ENCODE measurements at regions of chr1 and their contacts with region 1.

Region 1: DNA sequence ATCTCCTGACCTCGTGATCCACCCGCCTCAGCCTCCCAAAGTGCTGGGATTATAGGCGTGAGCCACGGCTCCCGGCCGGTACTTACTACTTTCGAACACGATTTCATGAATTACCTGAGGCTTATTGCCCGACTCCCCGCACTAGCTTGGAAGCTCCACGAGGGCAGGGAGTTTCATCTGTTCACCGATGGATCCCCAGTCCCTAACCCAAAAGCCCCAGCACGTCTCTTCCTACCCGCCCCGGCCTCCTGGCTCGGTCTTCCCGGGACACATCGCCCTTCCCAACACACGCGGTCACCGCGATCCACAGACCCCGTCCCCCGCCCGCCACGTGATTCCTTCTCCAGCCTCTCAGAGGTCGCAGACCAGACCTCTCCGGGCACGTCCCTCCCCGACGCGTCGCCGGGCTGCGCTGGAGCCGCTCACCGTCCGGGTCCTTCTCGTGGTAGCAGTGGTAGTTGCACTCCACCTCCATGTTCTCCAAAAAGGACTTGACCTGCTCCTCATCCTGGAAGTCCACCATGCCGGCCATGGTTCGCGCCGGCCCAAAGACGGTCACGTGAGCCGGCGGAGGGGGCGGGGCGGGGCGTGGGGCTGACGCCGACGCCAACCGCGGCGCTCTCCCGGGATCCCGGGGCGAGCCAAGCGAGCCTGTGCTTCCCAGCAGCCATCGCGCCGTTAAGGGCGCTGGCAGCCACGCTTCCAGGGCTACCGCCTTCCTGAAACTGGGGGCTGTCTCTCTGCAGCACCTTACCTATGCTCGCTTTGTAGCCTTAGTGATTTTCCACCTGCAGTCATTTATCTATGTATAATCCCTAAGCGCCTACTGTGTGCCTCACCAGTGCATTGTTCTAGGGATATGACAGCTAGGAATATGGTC is at the start of gene COA7:
- DNase-seq: peak; percentile 71
- H3K4me3 ChIP-seq: peak within 1 kb of the TSS; percentile 77
- H3K27ac ChIP-seq: no peak within 1 kb of the TSS
- H3K4me1 ChIP-seq: peaks cover 19% of the 10 kb centered on the region
- CTCF ChIP-seq: no peak
- total RNA-seq, gene COA7: 6.6 and 7.0 TPM in 2 replicates

Region 2: DNA sequence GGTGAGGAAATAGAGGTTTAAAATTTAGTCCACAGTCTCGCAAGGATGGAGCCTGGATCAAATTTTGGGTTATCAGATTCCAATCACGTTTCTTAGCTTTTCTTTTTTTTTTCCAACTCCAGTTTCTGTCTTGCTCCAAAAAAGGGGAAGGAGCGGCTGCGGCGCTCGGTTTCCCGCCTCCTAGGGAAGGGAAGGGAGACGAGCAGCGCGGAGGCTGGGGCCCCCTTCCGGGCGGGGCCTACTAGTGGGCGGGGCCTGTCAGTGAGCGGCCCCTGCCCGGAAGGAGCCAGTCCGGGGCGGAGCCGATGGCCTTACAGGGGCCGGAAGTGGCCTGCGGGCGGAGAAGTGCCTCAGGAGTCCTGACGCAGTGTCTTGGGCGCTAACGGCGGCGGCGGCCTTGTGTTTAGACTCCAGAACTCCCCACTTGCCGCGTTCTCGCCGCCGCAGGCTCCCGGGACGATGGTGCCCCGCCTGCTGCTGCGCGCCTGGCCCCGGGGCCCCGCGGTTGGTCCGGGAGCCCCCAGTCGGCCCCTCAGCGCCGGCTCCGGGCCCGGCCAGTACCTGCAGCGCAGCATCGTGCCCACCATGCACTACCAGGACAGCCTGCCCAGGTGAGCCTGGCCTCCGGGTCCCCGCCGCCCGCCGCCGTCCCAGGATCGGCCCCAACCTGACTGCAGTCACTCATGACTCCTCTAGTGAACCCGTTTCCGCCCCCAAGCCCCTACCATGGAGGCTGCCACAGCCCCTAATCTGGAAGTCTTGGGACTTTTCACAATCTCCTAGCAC is 498.6 kb after region 1 on chr1 and contains the start of gene CPT2:
- CTCF ChIA-PET with region 1: no interaction called
- POLR2A ChIA-PET with region 1: no interaction called
- intact Hi-C with region 1: loop called (anchors 5 kb)
- DNase-seq: peak; percentile 95
- H3K4me3 ChIP-seq: peak within 1 kb of the TSS; percentile 78
- H3K27ac ChIP-seq: peak within 1 kb of the TSS; percentile 56
- H3K4me1 ChIP-seq: peaks cover 20% of the 10 kb centered on the region
- CTCF ChIP-seq: no peak
- total RNA-seq, gene CPT2: 14.3 and 19.9 TPM in 2 replicates